ENCODE measurements at regions of chr10 and their contacts with region 1.

Region 1: DNA sequence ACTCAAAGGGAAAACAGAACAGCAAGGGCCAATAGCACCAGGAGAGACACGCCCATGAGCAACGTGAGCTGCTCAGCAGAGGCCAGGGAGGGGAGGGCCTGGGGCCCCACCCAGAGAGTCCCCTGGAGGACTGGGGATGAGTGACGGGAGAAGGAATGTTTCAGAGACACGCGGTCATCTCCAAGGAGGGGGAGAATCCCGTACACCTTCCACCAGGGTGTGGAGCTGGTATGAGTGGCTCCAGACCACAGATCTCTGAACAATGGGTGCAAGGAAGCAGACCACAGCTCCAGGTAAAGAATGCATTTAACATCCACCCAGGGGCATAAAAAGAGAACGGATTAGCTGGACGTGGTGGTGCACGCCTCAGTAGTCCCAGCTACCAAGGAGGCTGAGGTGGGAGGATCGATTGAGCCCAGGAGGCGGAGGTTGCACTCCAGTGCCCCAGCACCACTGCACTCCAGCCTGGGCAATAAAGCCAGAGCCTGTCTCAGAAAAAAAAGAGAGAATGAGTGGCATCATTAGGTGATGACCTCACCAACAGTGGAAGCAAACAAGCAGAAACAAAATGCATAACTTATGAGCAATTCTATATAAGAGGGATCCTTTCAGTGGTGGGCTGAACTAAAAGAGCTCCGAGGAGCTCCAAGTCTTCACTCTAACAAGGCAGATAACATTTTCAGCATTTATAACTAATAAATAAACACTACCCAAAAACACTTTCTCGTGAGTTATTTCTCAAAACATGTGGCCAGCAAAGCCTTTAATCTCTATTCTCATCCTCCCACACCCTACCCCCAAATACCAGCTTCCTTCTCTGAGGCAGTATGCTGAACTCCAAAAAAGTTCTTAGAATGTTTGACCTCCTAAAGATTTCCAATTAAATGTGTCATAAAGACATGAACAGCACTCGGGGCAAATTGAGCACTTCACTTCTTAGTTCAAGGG is 12.5 kb downstream of the PSAP start:
- DNase-seq: peak; percentile 65
- ATAC-seq: peak; percentile 71
- H3K4me3 ChIP-seq: no peak overlapping the region
- H3K27ac ChIP-seq: peak overlapping the region; percentile 35
- H3K4me1 ChIP-seq: peaks cover 18% of the 10 kb centered on the region
- H3K27me3 ChIP-seq: no peaks in the 10 kb centered on the region
- CTCF ChIP-seq: no peak

Region 2: GRCh38 chr10:71888623-71889387 is 50.3 kb after region 1 on chr10:
- CTCF ChIA-PET with region 1: no interaction called
- POLR2A ChIA-PET with region 1: no interaction called
- intact Hi-C with region 1: loop called (anchors 2 kb)
- DNase-seq: peak; percentile 42
- ATAC-seq: peak; percentile 78
- H3K4me3 ChIP-seq: peak overlapping the region; percentile 85
- H3K27ac ChIP-seq: peak overlapping the region; percentile 45
- H3K4me1 ChIP-seq: peaks cover 5% of the 10 kb centered on the region
- H3K27me3 ChIP-seq: no peaks in the 10 kb centered on the region
- CTCF ChIP-seq: peak; percentile 22; the same call in 1 of the 2 replicates

Region 3: DNA sequence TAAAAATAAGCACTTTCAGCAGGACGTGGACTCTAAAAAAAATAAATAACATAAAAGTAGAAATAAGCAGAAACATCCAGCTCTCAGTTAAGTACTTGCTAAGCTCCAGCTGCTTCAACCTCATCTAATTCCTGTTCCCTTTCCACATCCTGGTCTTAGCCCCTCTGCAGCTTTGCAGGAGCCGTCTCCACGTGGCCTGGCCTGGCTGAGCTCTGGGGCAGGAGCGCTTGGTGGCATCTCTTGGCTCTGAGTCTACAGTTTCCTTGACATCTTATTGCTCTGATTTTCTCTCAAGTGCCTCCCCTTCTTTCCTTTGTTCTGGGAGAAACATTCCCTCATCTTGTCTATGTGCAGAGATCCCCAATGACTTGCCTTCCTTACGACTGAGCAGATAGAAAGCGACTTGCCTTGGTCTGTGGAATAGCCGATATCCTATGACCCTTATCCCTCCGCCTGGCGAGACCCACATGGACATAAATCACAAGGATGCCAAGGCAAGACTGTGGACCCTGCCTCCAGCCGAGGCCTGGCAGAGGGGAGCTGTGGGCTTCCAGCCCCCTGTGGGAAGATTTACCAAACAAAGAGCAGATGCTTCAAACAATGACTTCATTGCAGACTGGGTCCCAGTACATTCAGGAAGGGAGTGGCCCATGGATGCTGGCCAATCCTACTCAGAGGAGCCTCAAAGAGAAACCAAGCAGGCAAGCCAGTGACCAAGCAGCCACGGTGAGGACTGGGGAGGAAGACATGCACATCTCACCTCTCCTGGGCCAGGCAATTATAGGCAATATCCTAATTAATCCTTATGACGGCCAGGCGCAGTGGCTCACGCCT is 188.0 kb after region 1 on chr10:
- CTCF ChIA-PET with region 1: no interaction called
- POLR2A ChIA-PET with region 1: no interaction called
- intact Hi-C with region 1: no loop called
- DNase-seq: peak; percentile 57
- ATAC-seq: peak; percentile 56
- H3K4me3 ChIP-seq: no peak overlapping the region
- H3K27ac ChIP-seq: peak overlapping the region; percentile 91; the same call in 1 of the 2 replicates
- H3K4me1 ChIP-seq: peaks cover 22% of the 10 kb centered on the region
- H3K27me3 ChIP-seq: no peaks in the 10 kb centered on the region
- CTCF ChIP-seq: no peak

Region 4: DNA sequence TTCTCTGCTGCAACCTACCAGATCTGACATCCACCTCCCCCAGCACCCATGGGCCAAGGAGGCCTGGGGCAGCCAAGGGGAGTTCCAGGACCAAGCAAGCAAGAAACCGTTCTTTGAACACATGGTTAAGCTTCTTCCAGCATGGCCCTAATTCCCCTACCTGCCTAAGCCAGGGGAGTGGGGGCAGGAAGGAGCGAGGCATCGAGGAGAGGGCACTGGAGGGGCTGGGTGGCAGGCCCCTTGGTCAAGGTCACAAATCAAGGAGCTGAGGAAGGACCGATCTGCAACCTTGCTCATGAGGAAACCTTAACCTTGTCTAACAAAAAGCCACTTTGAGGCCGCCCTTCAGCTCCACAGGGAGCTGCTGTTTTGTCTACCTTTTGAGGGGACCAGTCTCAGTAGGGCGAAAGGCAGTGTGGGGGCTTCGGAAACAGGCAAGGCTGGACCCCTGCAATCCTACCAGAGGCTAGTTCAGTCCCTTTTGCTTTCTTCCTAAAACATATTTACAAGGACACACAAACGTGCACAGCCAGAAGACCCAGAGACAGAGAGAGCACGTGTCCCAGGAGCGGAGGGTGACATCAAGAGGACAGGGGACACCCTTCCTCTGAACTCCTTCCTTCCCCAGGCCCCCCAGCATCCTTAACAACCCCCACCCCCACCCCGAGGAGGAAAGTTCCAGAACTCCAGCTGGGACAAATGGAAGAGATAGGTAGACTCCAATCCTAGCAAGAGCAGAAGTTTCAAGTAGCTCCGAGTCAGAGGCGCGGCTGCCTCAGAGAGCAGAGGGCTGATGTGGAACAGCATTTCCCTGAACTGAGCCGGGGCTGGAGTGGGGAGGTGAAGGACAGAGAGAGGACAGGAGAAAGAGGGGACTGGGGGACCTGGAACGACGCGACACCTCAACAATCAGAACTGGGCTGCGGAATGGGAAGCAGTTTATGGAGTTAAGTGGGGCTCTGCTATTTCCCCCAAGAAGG is 221.6 kb after region 1 on chr10:
- CTCF ChIA-PET with region 1: no interaction called
- POLR2A ChIA-PET with region 1: interaction called, 14 read pairs
- intact Hi-C with region 1: no loop called
- DNase-seq: no peak
- ATAC-seq: no peak
- H3K4me3 ChIP-seq: no peak overlapping the region
- H3K27ac ChIP-seq: no peak overlapping the region
- H3K4me1 ChIP-seq: peaks cover 8% of the 10 kb centered on the region
- H3K27me3 ChIP-seq: no peaks in the 10 kb centered on the region
- CTCF ChIP-seq: no peak

Region 5: GRCh38 chr10:72834183-72834825 is 995.8 kb after region 1 on chr10:
- CTCF ChIA-PET with region 1: no interaction called
- POLR2A ChIA-PET with region 1: no interaction called
- intact Hi-C with region 1: no loop called
- DNase-seq: peak; percentile 98
- ATAC-seq: peak; percentile 86
- H3K4me3 ChIP-seq: peak overlapping the region; percentile 1; the same call in 1 of the 2 replicates
- H3K27ac ChIP-seq: no peak overlapping the region
- H3K4me1 ChIP-seq: no peaks in the 10 kb centered on the region
- H3K27me3 ChIP-seq: peaks cover 31% of the 10 kb centered on the region
- CTCF ChIP-seq: peak; percentile 100

Measured in PC-3 (cell line).